Transverse colon (tissue), 4 donors: ENCODE measurements at regions of chr17 and their contacts with region 1.

Region 1: DNA sequence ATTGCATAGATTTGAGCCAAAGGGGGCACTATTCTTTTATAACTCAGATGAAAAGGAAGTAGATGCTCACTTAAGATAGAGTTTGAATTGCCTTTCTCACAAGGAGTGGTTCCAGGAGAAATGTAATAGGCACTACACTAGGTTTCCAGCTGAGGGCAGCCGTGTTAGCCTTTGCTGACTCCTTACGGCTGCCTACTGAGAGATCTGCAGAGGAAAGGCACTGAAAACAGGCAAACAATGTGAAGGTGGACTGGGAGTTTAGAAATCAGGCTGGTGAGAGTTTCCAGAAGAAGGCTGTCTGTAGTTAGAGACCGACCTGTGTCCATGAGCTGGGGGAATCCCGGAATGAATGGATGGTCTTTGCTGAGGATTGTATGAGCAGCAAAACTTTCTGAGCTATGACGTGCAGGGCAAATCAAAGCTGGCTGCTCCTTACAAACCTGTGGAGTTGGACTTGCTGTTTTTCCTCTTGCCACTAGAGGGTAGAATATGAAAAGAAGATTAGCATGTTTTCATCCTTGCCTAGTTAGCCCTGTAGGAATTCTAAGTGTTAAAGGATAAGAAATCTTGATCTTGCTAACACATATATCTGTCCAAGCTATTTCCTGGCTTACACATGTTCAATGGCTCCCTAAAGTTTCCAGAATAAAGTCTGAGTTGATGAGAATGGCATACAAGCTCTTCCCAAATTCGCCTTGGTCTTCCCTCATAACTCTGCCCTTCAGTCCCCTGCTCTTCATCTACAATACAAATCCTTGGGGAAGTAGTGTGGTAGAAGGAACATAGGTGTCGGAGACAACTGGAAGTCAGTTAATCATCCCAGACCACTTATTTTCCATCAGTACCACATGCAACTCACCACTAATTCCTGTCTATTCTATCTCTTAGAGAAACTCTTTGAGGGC is 20.1 kb upstream of the TAOK1 start:
- DNase-seq: peak; percentile 67
- H3K4me3 ChIP-seq: peak overlapping the region in 1 of 4 donors; percentile 31
- H3K27ac ChIP-seq: peak overlapping the region; percentile 52 to 71 (median 68)
- H3K4me1 ChIP-seq: peaks cover 0 to 7% (median 2%) of the 10 kb centered on the region in 4 donors
- H3K27me3 ChIP-seq: no peaks in the 10 kb centered on the region
- CTCF ChIP-seq: peak; percentile 73 to 88 (median 83)
- EP300 ChIP-seq: no peak
- POLR2A ChIP-seq: no peak

Region 2: DNA sequence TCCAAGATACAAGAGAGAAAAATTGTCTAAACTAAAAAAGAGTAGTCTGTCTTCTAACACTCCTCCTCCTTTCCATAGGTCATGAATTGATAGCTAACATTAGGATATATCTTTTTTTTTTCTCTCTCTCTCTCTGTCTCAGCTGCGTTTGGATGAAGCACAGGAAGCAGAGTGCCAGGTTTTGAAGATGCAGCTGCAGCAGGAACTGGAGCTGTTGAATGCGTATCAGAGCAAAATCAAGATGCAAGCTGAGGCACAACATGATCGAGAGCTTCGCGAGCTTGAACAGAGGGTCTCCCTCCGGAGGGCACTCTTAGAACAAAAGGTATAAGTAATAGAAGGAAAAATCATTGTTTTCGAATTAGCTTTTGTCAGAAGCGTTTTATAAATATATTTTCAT is 163.9 kb after region 1 on chr17:
- in situ Hi-C with region 1: loop called (anchors 5 to 25 kb)
- intact Hi-C with region 1: loop called (anchors 1 kb)
- DNase-seq: no peak
- H3K4me3 ChIP-seq: no peak overlapping the region
- H3K27ac ChIP-seq: no peak overlapping the region
- H3K4me1 ChIP-seq: no peaks in the 10 kb centered on the region
- H3K27me3 ChIP-seq: no peaks in the 10 kb centered on the region
- CTCF ChIP-seq: no peak
- EP300 ChIP-seq: no peak
- POLR2A ChIP-seq: no peak

Region 3: DNA sequence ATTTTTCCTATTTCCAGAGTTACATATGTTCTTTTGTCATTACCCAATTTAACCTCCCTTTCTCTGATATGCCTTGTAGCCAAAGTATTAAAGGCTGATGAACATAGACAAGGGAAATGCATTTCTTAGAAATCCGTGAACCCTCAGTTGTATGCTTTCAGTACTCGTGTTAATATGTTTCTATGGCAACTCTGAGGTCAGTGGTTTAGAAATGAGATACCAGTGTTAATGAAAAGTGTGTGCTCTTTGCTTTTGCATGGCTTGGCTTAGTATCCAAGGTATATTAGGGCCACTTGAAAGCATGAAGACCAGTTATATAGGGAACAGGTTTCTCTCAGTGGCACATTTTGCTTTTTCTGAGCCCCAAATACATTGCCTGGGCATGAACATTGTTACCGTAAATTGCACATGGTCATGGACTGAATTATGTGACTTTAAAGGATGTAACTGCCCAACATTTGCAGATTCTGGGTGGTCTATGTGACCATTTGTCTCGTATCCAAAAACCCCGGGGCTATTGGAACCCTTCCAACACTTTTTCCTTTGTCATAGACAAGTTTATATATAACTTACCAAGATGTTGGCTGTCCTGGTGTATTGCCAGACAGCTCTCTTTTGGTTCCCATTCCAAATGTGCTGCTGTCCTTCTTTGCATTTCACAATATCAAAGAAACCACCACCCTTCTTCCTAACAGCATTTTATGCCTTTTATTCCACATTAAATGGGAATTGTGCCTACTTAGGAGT is 179.3 kb after region 1 on chr17:
- in situ Hi-C with region 1: loop called in 1 of 4 experiments (anchors 25 kb)
- intact Hi-C with region 1: no loop called
- DNase-seq: no peak
- H3K4me3 ChIP-seq: no peak overlapping the region
- H3K27ac ChIP-seq: no peak overlapping the region
- H3K4me1 ChIP-seq: peaks cover 0 to 6% (median 0%) of the 10 kb centered on the region in 4 donors
- H3K27me3 ChIP-seq: no peaks in the 10 kb centered on the region
- CTCF ChIP-seq: no peak
- EP300 ChIP-seq: no peak
- POLR2A ChIP-seq: no peak